HEK293 (cell line): ENCODE measurements at regions of chr19 and their contacts with region 1.

Region 1: DNA sequence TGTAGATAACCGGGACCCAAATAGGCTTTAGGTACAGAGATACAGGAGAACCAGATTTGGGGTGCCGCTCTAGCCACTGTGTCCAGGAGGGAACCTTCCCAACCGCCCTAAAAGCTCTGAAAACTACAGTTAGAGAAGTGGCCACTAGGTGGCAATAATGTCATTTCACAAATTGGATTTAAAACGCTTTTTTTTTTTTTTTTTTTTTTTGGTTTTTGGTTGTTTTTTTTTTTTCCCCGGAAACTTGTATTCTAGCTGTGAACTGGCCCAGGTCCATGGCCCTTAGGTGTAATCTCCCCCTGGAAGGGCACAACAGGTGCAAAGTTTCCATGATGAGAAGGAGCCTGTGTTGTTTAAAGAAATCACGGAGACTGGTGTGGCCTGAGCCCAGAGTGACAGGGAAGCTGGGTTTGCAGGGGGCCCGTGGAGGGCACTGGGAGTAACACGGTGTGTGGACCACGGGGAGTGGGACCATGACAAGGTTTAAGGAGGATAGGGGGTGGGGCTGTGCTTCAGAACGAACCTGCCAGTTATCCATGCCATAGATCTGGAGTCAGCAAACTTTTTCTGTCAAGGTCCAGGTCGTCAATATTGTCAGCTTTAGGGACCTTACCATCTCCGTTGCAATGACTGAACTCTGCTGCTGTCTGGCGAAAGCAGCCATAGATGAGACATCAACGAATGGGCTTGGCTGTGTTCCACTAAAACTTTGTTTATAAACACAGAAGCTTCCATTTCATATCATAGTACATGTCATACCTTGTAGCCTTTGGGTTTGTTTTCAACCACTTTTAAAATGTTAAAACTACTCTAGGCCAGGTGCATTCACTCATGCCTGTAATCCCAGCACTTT is 10.1 kb downstream of the OR1I1 start:
- H3K4me3 ChIP-seq: no peak overlapping the region
- H3K27ac ChIP-seq: no peak overlapping the region
- H3K4me1 ChIP-seq: no peaks in the 10 kb centered on the region
- CTCF ChIP-seq: 0 out of 2 replicates have a peak, but pooled peaks have one; percentile 12

Region 2: GRCh38 chr19:15015946-15016542 is 76.1 kb before region 1 on chr19:
- CTCF ChIA-PET with region 1: no interaction called
- POLR2A ChIA-PET with region 1: no interaction called
- H3K4me3 ChIP-seq: no peak overlapping the region
- H3K27ac ChIP-seq: no peak overlapping the region
- H3K4me1 ChIP-seq: no peaks in the 10 kb centered on the region
- CTCF ChIP-seq: no peak

Region 3: GRCh38 chr19:15081911-15082310 is 10.2 kb before region 1 on chr19 and contains the start of gene OR1I1:
- CTCF ChIA-PET with region 1: interaction called, 11 read pairs
- POLR2A ChIA-PET with region 1: no interaction called
- H3K4me3 ChIP-seq: no peak within 1 kb of the TSS
- H3K27ac ChIP-seq: no peak within 1 kb of the TSS
- H3K4me1 ChIP-seq: no peaks in the 10 kb centered on the region
- CTCF ChIP-seq: no peak

Region 4: GRCh38 chr19:15107061-15108010 is 15.2 kb after region 1 on chr19 and contains the start of gene SYDE1:
- CTCF ChIA-PET with region 1: interaction called, 18 read pairs
- POLR2A ChIA-PET with region 1: no interaction called
- H3K4me3 ChIP-seq: peak within 1 kb of the TSS; percentile 76
- H3K27ac ChIP-seq: peak within 1 kb of the TSS; percentile 16; the same call in 1 of the 2 replicates
- H3K4me1 ChIP-seq: no peaks in the 10 kb centered on the region; the same call in 1 of the 2 replicates
- CTCF ChIP-seq: no peak

Region 5: GRCh38 chr19:15154002-15154612 is 62.0 kb after region 1 on chr19:
- CTCF ChIA-PET with region 1: interaction called, 12 read pairs
- POLR2A ChIA-PET with region 1: no interaction called
- H3K4me3 ChIP-seq: no peak overlapping the region
- H3K27ac ChIP-seq: no peak overlapping the region
- H3K4me1 ChIP-seq: no peaks in the 10 kb centered on the region
- CTCF ChIP-seq: no peak

Region 6: DNA sequence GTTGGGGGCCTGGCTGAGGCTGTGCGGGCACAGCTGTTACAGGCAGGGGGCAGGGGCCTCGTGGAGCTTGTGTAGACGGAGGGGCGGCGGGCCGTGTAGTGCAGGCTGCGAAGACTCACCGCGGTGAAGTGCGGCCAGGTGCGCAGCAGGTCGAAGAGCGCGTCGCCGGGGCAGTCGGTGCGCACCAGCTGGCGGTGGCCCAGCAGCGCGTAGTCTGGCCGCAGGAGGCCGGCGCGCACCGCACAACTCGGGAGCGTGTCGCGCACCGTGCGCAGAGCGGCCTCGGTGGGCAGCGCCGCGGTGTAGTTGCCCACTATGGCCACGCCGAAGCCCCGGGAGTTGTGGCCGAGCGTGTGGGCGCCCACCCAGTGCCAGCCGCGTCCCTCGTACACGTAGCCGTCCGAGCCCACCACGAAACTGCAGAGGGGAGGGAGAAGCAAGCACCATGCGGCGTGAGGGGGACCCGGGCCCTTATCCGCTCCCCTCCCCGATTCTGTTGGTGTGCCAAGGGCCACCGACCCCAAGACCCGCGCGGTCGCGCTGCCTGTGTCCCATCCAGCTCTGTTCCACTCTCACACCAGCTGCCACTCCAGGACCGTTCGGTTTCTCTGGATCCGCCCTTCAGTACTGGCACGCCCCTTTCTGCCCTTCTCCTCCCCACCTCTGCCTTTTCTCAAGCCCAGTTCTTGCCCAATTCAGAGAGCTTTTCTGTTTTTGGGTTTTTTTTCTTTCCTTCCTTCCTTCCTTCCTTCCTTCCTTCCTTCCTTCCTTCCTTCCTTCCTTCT is 377.6 kb after region 1 on chr19:
- CTCF ChIA-PET with region 1: interaction called, 10 read pairs
- POLR2A ChIA-PET with region 1: no interaction called
- H3K4me3 ChIP-seq: no peak overlapping the region
- H3K27ac ChIP-seq: no peak overlapping the region
- H3K4me1 ChIP-seq: no peaks in the 10 kb centered on the region
- CTCF ChIP-seq: no peak

Region 7: DNA sequence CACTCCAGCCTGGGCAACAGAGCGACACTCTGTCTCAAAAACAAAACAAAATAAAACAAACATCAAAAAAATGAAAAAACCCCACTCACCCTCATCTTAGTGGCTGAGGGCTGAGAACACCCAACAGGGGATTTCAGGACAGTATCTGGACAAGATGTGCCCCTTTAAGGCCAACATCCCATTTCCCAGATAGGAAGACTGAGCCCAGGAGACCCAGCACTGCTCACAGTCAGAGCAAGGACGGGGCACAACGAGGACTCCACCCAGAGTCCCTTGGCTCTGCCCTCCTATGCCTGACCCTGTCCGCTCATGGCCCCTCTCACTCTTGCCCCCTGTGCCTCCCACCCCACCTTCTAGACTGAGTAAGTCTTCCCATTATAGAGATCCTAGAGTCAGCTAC is 470.0 kb after region 1 on chr19:
- CTCF ChIA-PET with region 1: interaction called, 11 read pairs
- POLR2A ChIA-PET with region 1: no interaction called
- H3K4me3 ChIP-seq: no peak overlapping the region
- H3K27ac ChIP-seq: no peak overlapping the region
- H3K4me1 ChIP-seq: peaks cover 3% of the 10 kb centered on the region; the same call in 1 of the 2 replicates
- CTCF ChIP-seq: no peak